ENCODE measurements at regions of chr5 and their contacts with region 1.

Region 1: DNA sequence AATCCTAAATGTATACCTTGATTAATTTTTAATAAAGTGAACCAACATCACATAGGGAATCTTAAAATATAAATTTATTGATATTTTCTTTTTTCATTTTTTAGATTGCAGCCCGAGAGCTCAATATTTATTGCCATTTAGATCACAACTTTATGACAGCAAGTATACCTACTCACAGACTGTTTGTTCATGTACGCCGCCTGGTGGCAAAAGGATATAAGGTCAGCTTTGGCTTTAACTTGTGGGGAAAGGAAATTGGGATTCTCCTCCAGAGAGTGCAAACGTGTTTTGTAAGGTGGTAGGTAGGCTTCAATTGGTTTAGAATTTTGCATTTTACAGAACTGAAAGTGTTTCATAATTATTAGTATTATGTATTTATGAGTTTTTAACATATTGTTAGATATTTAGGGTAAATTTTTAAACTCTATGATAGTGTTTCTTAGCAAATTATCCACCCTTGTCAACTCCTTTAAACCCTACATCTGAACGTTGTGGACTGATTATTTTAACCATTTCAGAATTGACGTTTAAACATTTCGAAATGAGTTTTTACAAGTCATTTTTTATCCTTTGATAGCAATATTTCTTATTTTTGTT is 17.5 kb upstream of the DHFR start:
- DNase-seq: peak; percentile 54 to 80 (median 58)
- ATAC-seq: peak in 3 of 4 donors; percentile 54 to 59 (median 55)
- H3K4me3 ChIP-seq: no peak overlapping the region
- H3K27ac ChIP-seq: no peak overlapping the region
- H3K4me1 ChIP-seq: peaks cover 0 to 8% (median 0%) of the 10 kb centered on the region in 12 donors
- H3K27me3 ChIP-seq: no peaks in the 10 kb centered on the region
- CTCF ChIP-seq: peak; percentile 65 to 88 (median 80)
- POLR2A ChIP-seq: no peak

Region 2: GRCh38 chr5:80474929-80475328 is 197.3 kb before region 1 on chr5:
- intact Hi-C with region 1: loop called in 6 of 10 experiments (anchors 2 to 10 kb)
- DNase-seq: no peak
- ATAC-seq: no peak
- H3K4me3 ChIP-seq: no peak overlapping the region
- H3K27ac ChIP-seq: no peak overlapping the region
- H3K4me1 ChIP-seq: no peaks in the 10 kb centered on the region
- H3K27me3 ChIP-seq: no peaks in the 10 kb centered on the region
- CTCF ChIP-seq: no peak
- POLR2A ChIP-seq: no peak

Region 3: DNA sequence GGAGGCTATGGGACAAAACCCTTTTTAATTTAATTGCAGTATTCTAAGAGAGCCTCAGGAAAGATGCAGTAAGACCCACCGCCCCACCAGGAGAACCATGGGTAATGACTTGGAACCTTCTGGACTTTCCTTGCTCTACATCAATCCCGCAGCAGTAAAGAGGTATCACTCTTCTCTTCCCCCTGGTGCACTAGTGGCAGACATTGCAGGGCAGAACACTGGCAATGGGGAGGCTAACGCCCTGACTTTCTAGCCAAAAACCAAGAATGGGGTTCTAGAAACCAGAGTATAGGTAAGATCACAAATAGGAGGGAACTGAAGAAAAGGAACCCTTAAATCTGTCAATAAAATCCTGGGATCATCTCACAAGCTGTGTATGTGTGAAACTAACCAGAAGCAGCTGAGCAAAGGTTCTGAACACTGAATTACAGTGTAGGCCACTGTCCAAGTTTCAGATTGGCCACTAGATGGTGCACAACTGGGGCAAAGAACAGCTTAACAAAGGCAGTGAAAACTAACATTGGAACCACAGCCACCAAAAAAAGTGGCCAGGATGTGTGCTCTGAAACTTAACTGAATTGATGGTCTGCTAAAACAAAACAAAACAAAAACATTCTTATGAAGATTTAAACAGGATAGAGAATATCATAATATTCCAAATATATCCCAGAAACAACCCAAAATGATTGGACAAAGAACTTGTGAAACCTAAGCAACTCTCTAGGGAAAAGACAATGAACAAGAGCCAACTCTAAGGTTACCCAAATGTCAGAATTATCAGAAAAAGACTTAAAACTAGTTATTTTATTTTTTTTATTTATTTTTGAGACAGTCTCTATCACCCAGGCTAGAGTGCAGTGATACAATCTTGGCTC is 191.0 kb before region 1 on chr5:
- intact Hi-C with region 1: loop called (anchors 2 to 10 kb)
- DNase-seq: no peak
- ATAC-seq: peak in 3 of 4 donors; percentile 72 to 83 (median 81)
- H3K4me3 ChIP-seq: no peak overlapping the region
- H3K27ac ChIP-seq: no peak overlapping the region
- H3K4me1 ChIP-seq: no peaks in the 10 kb centered on the region
- H3K27me3 ChIP-seq: no peaks in the 10 kb centered on the region
- CTCF ChIP-seq: peak; percentile 35 to 65 (median 54)
- POLR2A ChIP-seq: no peak

Region 4: DNA sequence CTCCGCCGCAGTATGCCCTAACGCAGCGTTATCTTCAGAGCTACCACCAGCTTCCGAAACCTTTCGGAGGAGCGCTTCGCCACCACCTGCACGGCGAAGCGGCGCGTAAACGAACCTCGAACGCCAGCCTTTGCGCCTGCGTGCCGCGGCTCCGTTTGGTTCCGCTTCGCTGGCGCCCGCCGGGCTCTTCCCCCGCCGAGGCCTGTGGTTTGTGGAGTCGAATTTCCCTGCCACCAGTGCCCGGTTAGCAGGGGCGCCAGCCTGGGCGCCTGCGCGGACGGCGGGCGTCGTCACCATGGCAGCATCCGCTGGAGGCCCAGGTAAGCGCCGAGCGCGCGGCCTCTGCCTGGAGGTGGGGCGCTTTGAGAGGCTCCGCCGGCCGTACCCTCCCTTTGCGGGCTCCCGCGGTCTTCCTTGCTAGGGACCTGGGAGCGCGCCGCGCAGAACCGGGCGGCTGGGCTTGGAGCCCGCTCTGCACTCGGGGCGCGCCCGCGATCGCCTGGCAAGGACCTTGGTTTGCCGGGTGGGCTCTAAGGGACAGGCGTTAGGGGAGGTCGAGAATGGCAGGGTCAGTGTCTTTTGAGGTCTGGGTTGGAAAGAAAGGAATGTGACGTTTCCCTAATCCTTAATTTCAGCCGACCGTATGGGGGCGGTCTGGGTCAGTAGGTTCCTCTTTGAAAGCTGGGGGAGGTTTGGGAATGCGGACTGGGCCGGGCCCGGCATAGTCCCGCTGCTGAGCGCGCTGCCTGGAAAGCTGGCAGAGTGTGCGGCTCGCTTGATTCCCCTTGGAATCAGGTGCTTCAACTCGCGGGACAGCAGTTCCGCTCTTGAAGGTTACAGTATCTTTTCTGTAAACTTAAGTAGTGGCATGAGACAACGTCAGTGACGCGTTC is 184.2 kb before region 1 on chr5 and contains the start of gene FAM151B:
- intact Hi-C with region 1: loop called in 9 of 10 experiments (anchors 2 to 10 kb)
- DNase-seq: peak; percentile 80 to 91 (median 88)
- ATAC-seq: peak; percentile 86 to 96 (median 95)
- H3K4me3 ChIP-seq: peak within 1 kb of the TSS; percentile 47 to 88 (median 70)
- H3K27ac ChIP-seq: peak within 1 kb of the TSS in 11 of 12 donors; percentile 12 to 86 (median 78)
- H3K4me1 ChIP-seq: peaks cover 0 to 18% (median 2%) of the 10 kb centered on the region in 12 donors
- H3K27me3 ChIP-seq: no peaks in the 10 kb centered on the region
- CTCF ChIP-seq: peak in 7 of 12 donors; percentile 3 to 48 (median 36)
- POLR2A ChIP-seq: peak in 1 of 2 donors; percentile 10
- total RNA-seq, gene FAM151B: 1.2 to 2.3 (median 1.7) TPM

Region 5: DNA sequence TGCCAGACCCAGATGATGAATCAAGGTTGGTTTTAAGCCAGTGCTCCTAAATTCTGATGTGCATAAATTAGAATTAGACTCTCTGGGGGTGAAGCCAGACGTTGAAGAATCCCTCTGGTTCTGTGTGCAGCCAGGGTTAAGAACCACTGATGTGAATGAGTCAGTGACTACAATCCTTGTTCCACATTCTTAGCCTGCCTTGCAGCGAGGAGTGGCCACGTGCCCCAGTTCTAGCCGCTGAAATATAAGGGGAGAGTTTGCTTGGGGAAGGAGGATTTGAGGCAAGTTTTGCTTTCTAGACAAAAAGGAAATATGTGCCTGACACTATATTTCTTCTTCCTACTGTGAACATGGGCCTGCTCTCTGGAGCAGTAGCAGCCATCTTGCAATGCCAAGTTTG is 52.0 kb before region 1 on chr5:
- intact Hi-C with region 1: no loop called
- DNase-seq: no peak
- ATAC-seq: no peak
- H3K4me3 ChIP-seq: no peak overlapping the region
- H3K27ac ChIP-seq: no peak overlapping the region
- H3K4me1 ChIP-seq: no peaks in the 10 kb centered on the region
- H3K27me3 ChIP-seq: no peaks in the 10 kb centered on the region
- CTCF ChIP-seq: no peak
- POLR2A ChIP-seq: no peak

Measured in heart left ventricle (tissue), 16 donors.